AG04449 (cell line): ENCODE measurements at regions of chr4 and their contacts with region 1.

Region 1: DNA sequence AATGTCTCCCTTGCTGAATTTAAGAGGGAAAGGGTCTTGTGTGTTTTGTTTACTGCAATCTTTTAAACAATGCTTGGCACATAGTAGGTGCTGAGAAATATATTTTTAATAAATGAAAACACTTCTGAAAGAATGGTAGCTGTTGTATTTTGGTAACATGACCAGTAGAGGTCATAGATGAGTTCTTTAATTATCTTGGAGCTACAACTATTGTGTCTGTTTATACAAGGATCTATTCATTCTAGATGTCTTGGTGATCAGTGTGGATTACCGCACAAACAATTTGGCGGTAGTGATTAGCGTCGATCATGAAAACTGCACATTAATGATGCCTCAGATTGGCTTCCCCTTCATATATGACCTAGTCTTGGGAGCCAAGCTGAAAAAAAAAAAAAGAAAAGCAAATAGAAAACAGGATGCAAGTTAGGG is 21.4 kb upstream of the SCRG1 start:
- DNase-seq: no peak
- H3K4me3 ChIP-seq: no peak overlapping the region
- CTCF ChIP-seq: peak; percentile 12

Region 2: GRCh38 chr4:173301518-173302201 is 118.7 kb before region 1 on chr4:
- CTCF ChIA-PET with region 1: interaction called, 18 read pairs
- POLR2A ChIA-PET with region 1: no interaction called
- DNase-seq: no peak
- H3K4me3 ChIP-seq: no peak overlapping the region
- CTCF ChIP-seq: peak; percentile 35

Region 3: DNA sequence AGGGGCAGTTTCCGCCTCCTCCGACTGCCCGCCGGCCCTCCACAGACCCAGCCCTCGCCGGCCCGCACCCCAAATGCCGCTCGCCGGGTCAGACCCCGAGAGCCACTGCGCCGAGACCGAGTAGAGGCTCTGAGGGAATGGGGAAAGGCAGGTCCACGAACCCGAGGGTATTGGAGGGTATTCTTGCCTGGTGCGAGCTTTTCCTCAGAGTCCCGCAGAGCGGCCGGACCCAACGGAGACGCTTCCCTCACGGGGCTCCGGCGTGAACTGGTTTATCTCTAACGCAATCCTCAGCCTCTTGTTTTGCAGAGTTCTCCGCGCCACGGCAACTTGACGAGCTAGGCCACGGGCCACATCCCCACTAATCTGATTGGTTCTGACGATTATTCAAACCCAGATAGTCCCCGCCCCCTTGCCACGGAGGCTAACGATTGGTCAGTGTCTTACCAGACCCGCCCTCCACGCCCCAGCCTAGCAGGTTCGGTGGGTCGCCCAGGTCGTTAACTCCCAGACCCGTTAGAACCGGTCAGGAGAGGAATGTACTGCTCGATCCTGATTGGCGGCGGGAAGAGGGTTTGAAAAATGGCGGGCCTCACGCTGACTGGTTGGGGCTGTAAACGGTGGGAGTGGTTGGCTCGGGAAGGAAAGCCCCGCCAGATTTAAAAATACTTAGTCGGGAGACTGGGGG is 86.1 kb before region 1 on chr4 and contains the start of gene HMGB2:
- CTCF ChIA-PET with region 1: interaction called, 11 read pairs
- POLR2A ChIA-PET with region 1: interaction called, 7 read pairs
- DNase-seq: peak; percentile 100
- H3K4me3 ChIP-seq: peak within 1 kb of the TSS; percentile 98
- CTCF ChIP-seq: no peak

Region 4: GRCh38 chr4:173398779-173399415 is 21.4 kb before region 1 on chr4 and contains the start of gene SCRG1:
- CTCF ChIA-PET with region 1: interaction called, 28 read pairs
- POLR2A ChIA-PET with region 1: no interaction called
- DNase-seq: no peak
- H3K4me3 ChIP-seq: peak within 1 kb of the TSS; percentile 41
- CTCF ChIP-seq: no peak

Region 5: DNA sequence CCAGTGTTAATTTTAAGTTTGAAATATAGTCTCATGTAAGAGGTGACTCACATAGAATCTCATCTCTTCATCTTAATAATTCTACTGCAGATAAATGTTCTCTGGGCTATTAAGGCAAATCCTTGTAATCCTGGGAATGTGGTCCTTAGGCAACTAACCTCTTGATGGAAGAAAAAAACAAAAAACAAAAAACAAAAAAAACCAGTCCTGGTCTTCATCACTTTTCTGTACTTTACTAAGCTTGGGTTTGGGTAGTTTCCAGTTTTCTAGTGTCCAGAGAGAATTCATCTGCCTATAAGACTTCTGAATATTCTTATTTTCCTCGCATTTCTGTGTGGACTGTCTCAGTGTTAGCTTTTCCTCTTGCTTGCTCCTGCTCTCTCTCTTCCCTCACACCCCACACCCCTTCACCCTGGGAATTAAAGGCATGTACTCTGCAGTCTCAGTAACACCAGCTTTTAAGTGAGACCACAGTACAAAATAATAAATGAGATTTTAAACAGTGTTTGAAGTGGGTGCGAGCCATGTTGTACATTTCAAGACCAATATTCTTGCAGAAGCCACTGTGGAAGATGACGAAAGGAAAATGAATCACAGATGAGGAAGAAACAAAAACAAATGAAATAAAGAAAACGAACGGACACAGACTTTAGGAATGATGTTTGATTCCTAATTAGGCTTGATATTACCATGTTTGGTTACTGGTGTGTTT is 58.0 kb after region 1 on chr4:
- CTCF ChIA-PET with region 1: interaction called, 14 read pairs
- POLR2A ChIA-PET with region 1: interaction called, 3 read pairs
- DNase-seq: peak; percentile 55
- H3K4me3 ChIP-seq: no peak overlapping the region
- CTCF ChIP-seq: no peak

Region 6: DNA sequence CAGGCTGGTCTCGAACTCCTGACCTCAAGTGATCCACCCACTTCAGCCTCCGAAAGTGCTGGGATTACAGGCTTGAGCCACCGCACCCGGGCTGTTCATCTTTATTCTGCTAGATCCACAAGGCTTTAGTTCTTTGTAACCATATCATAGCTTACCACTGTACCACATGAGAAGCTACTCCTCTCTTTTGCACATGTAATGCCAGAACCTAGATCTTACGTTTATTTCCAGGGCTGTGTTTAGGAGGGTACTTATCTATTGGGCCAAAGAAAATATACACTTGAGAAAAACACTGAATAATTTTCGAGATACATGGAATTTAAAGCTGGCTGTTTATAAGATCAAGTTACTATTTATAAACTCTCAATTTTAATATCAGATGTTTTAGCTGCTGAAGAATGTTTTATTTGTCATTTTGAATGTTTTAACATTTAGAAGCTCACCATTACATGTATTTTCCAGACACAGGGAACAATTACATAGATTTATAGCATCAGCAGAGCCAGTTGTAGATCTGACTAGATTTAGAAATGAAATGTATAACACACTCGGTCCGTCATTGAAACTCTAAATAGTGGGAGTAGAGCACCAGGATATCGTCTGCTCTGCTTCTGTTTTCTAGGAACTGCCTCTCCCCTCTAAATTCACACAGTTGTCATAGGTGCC is 265.0 kb after region 1 on chr4:
- CTCF ChIA-PET with region 1: no interaction called
- POLR2A ChIA-PET with region 1: no interaction called
- DNase-seq: no peak
- H3K4me3 ChIP-seq: no peak overlapping the region
- CTCF ChIP-seq: no peak

Region 7: GRCh38 chr4:173990126-173990868 is 570.0 kb after region 1 on chr4:
- CTCF ChIA-PET with region 1: interaction called, 19 read pairs
- POLR2A ChIA-PET with region 1: no interaction called
- DNase-seq: peak; percentile 9
- H3K4me3 ChIP-seq: no peak overlapping the region
- CTCF ChIP-seq: peak; percentile 49